ENCODE measurements at regions of chr2 and their contacts with region 1.

Region 1: DNA sequence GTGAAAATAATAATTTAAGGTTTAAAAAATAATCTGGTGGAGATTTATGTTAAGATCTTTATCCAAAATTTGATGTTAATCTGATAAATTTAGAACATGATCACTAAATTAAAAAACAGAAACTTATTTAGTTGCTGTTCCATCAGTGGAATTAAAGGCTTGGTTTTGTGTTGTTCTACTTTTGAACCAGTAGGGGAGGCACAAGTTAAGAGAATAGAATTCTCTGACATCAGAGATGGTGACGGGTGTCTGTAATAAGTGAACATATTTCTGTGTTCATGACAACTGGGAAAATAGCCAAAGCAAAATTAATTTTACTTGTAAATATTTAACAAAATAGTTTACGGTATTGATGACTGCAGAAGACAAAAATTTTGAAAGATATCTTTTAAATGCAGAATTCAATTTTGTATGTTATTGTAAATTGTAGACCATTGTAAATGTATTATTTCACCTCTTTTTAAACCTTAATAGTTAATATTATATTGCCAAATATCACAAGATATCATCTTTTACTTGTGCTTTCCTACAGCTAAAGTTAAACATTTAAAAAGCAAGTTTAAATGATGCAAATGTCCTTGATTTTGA is 106.0 kb downstream of the UBR3 start:
- DNase-seq: peak; percentile 67
- H3K4me3 ChIP-seq: no peak overlapping the region
- H3K27ac ChIP-seq: no peak overlapping the region
- H3K4me1 ChIP-seq: no peaks in the 10 kb centered on the region
- H3K27me3 ChIP-seq: no peaks in the 10 kb centered on the region
- CTCF ChIP-seq: peak; percentile 78

Region 2: GRCh38 chr2:169452080-169452479 is 481.1 kb before region 1 on chr2:
- CTCF ChIA-PET with region 1: no interaction called
- POLR2A ChIA-PET with region 1: no interaction called
- intact Hi-C with region 1: loop called (anchors 2 kb)
- DNase-seq: peak; percentile 71
- H3K4me3 ChIP-seq: no peak overlapping the region
- H3K27ac ChIP-seq: no peak overlapping the region
- H3K4me1 ChIP-seq: no peaks in the 10 kb centered on the region
- H3K27me3 ChIP-seq: no peaks in the 10 kb centered on the region
- CTCF ChIP-seq: peak; percentile 65

Region 3: GRCh38 chr2:169775765-169776164 is 157.5 kb before region 1 on chr2:
- CTCF ChIA-PET with region 1: no interaction called
- POLR2A ChIA-PET with region 1: interaction called, 10 read pairs
- intact Hi-C with region 1: no loop called
- DNase-seq: no peak
- H3K4me3 ChIP-seq: no peak overlapping the region
- H3K27ac ChIP-seq: no peak overlapping the region
- H3K4me1 ChIP-seq: no peaks in the 10 kb centered on the region
- H3K27me3 ChIP-seq: no peaks in the 10 kb centered on the region
- CTCF ChIP-seq: no peak

Region 4: GRCh38 chr2:169961911-169962310 is 28.7 kb after region 1 on chr2:
- CTCF ChIA-PET with region 1: no interaction called
- POLR2A ChIA-PET with region 1: no interaction called
- intact Hi-C with region 1: no loop called
- DNase-seq: no peak
- H3K4me3 ChIP-seq: no peak overlapping the region
- H3K27ac ChIP-seq: no peak overlapping the region
- H3K4me1 ChIP-seq: no peaks in the 10 kb centered on the region
- H3K27me3 ChIP-seq: no peaks in the 10 kb centered on the region
- CTCF ChIP-seq: no peak

Region 5: GRCh38 chr2:170229744-170230143 is 296.5 kb after region 1 on chr2:
- CTCF ChIA-PET with region 1: no interaction called
- POLR2A ChIA-PET with region 1: no interaction called
- intact Hi-C with region 1: loop called (anchors 2 kb)
- DNase-seq: no peak
- H3K4me3 ChIP-seq: no peak overlapping the region
- H3K27ac ChIP-seq: no peak overlapping the region
- H3K4me1 ChIP-seq: no peaks in the 10 kb centered on the region
- H3K27me3 ChIP-seq: no peaks in the 10 kb centered on the region
- CTCF ChIP-seq: no peak

Region 6: DNA sequence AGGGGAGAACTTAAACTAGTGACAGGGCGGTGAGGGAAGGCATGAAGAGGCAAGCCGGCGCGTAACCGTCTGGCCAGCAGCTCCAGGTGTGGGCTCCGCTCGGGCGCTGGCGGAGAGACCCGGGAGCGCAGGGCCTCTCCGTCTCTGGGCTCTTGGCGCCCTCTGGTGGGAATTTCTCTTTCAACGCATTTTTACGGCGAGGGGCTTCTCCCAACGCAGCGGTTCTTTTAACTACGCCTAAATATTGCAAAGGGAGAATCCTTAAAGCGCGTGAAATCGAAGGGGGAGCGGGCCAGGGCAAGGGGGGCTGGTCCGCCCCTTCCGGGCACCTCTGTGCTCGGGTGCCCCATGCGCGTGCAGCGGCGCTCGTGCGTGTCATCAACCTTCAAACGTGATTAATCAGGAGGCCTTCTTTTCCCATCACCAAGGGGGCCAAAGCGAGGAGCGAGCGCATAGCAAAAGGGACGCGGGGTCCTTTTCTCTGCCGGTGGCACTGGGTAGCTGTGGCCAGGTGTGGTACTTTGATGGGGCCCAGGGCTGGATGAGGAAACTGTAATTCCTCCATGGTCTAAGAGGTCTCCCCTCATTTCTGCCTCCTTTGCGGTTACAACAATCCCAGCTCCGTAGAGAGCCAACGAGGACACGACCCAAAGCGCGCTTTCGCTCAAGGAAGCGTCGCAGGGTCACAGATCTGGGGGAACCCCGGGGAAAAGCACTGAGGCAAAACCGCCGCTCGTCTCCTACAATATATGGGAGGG is 882.7 kb after region 1 on chr2:
- CTCF ChIA-PET with region 1: no interaction called
- POLR2A ChIA-PET with region 1: no interaction called
- intact Hi-C with region 1: loop called (anchors 5 kb)
- DNase-seq: peak; percentile 83
- H3K4me3 ChIP-seq: peak overlapping the region; percentile 44
- H3K27ac ChIP-seq: no peak overlapping the region
- H3K4me1 ChIP-seq: peaks cover 19% of the 10 kb centered on the region
- H3K27me3 ChIP-seq: peaks cover 75% of the 10 kb centered on the region
- CTCF ChIP-seq: peak; percentile 81